Activated B cell treated with CpG ODN at 0.5 μM for 24 hours (primary cell): ENCODE measurements at regions of chrX and their contacts with region 1.

Region 1: DNA sequence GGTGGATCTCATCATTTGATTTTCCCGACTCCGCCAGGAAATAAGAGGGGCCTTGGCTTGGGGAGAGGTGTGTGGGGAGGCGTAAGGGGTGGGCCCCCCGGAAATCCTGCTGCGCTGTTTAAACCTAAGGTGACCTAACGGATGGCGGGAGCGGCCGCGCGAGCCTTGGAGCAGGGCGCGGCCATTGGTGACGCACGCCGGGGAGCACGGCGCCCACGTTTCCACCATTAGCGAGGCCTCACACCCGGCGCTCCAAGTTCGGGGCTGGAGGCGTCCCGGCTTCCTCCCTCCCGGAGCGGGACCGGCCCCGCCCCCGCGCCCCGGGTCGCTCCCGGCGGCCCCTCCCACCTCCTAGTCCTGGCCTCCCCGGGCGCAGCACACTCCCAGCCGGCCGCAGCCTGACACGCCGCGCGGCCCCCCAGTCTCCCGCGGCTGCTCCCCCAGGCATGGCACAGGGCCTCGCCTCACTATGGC is at the start of gene SMS:
- DNase-seq: peak; percentile 41
- ATAC-seq: peak; percentile 60
- H3K4me3 Mint-ChIP-seq: peak within 1 kb of the TSS; percentile 88
- H3K27ac Mint-ChIP-seq: peak within 1 kb of the TSS; percentile 85
- H3K4me1 Mint-ChIP-seq: peaks cover 27% of the 10 kb centered on the region
- H3K27me3 Mint-ChIP-seq: no peaks in the 10 kb centered on the region
- CTCF ChIP-seq: no peak
- total RNA-seq, gene SMS: 66.3 and 69.7 TPM in 2 replicates

Region 2: GRCh38 chrX:21374163-21374993 is 566.0 kb before region 1 on chrX and contains the start of gene CNKSR2:
- CTCF ChIA-PET with region 1: no interaction called
- POLR2A ChIA-PET with region 1: interaction called, 3 read pairs
- intact Hi-C with region 1: loop called (anchors 1 kb)
- DNase-seq: peak; percentile 74
- ATAC-seq: peak; percentile 77
- H3K4me3 Mint-ChIP-seq: peak within 1 kb of the TSS; percentile 92
- H3K27ac Mint-ChIP-seq: peak within 1 kb of the TSS; percentile 86
- H3K4me1 Mint-ChIP-seq: peaks cover 30% of the 10 kb centered on the region
- H3K27me3 Mint-ChIP-seq: no peaks in the 10 kb centered on the region
- CTCF ChIP-seq: no peak
- total RNA-seq, gene CNKSR2: 15.6 and 15.7 TPM in 2 replicates

Region 3: GRCh38 chrX:21972721-21973120 is 32.3 kb after region 1 on chrX:
- CTCF ChIA-PET with region 1: no interaction called
- POLR2A ChIA-PET with region 1: no interaction called
- intact Hi-C with region 1: loop called (anchors 2 kb)
- DNase-seq: no peak
- ATAC-seq: peak; percentile 56
- H3K4me3 Mint-ChIP-seq: no peak overlapping the region
- H3K27ac Mint-ChIP-seq: peak overlapping the region; percentile 72
- H3K4me1 Mint-ChIP-seq: peaks cover 27% of the 10 kb centered on the region
- H3K27me3 Mint-ChIP-seq: no peaks in the 10 kb centered on the region
- CTCF ChIP-seq: no peak

Region 4: GRCh38 chrX:22063284-22063683 is 122.9 kb after region 1 on chrX:
- CTCF ChIA-PET with region 1: no interaction called
- POLR2A ChIA-PET with region 1: interaction called, 5 read pairs
- intact Hi-C with region 1: loop called (anchors 5 kb)
- DNase-seq: peak; percentile 25
- ATAC-seq: peak; percentile 90
- H3K4me3 Mint-ChIP-seq: peak overlapping the region; percentile 41
- H3K27ac Mint-ChIP-seq: peak overlapping the region; percentile 80
- H3K4me1 Mint-ChIP-seq: peaks cover 76% of the 10 kb centered on the region
- H3K27me3 Mint-ChIP-seq: no peaks in the 10 kb centered on the region
- CTCF ChIP-seq: no peak

Region 5: DNA sequence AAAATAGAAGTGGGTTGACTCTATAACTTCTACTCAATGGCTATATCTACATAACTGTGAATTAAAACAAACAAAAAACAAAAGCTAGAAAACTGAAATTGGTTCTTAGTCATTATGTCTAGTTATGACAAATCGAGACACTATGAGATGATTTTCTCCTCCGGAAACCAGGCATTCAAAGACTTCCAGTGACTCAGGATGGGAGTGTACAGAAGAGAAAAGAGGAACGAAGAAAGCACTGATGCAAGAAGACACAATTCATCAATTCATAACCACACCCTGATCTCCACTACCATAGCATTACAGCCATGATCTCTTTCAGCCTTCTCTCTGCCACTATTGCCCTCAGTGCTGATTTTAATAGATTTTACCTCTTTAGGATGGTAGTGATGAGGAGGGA is 585.9 kb after region 1 on chrX:
- CTCF ChIA-PET with region 1: no interaction called
- POLR2A ChIA-PET with region 1: no interaction called
- intact Hi-C with region 1: loop called (anchors 2 kb)
- DNase-seq: no peak
- ATAC-seq: peak; percentile 98
- H3K4me3 Mint-ChIP-seq: peak overlapping the region; percentile 70
- H3K27ac Mint-ChIP-seq: peak overlapping the region; percentile 89
- H3K4me1 Mint-ChIP-seq: peaks cover 35% of the 10 kb centered on the region
- H3K27me3 Mint-ChIP-seq: no peaks in the 10 kb centered on the region
- CTCF ChIP-seq: no peak

Region 6: DNA sequence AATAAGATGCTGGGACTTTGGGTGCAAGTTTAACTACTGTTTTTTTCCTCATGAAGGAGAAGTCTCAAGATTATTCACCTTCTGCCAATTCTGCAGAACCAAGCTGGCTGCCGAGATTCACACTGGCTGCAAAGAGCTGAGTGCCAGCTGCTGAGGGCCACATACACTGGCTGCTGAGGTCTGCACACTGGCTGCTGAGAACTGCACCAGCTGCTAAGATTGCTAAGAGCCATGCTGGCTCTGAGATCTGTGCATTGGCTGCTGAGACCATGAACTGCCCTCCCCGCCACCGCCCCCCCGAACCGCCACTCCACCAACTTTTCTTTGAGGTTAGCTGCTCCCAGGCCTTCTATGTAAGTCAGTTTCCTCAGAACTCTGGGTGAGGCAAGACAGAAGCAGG is 662.7 kb after region 1 on chrX:
- CTCF ChIA-PET with region 1: no interaction called
- POLR2A ChIA-PET with region 1: no interaction called
- intact Hi-C with region 1: no loop called
- DNase-seq: no peak
- ATAC-seq: no peak
- H3K4me3 Mint-ChIP-seq: no peak overlapping the region
- H3K27ac Mint-ChIP-seq: no peak overlapping the region
- H3K4me1 Mint-ChIP-seq: no peaks in the 10 kb centered on the region
- H3K27me3 Mint-ChIP-seq: no peaks in the 10 kb centered on the region
- CTCF ChIP-seq: no peak